Caco-2 (cell line): ENCODE measurements at regions of chr17 and their contacts with region 1.

Region 1: DNA sequence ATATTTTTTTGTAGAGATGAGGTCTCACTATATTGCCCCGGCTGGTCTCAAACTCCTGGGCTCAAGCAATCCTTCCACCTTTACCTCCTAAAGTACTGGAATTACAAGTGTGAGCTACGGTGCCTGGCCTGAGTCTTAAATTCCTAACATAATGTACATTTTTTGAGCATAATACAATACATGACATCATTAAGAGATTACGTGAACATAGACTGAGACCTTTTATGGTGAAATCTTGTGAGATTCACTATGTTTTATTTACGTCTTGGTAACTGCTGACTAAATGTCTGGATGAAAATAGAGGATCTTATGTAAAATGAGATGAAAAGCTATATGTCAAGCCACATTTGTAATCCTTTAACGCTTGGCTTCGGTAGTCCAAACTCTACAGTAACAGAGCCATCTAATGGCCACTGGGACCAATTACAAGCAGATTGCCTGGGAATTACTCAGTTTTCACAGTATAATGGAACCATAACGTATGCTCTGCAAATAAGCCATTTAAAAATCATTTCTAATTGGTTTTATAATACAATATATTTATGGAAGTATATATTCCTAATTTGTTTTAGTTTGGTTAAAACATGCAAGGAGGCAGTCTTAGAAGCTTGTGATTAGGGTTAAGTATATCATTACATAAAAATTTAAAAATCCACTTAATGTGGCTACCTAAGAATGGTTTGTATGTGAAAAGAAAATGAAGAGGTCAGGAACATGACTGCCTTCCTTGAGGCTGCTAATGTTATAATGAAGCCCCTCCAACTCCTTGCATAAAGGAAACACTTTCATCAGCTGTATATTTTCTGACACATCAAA is 8.1 kb upstream of the EFCAB13 start:
- DNase-seq: peak in 1 of 2 experiments; percentile 57
- H3K4me3 ChIP-seq: no peak overlapping the region
- H3K4me3 Mint-ChIP-seq: no peak overlapping the region
- H3K27ac Mint-ChIP-seq: no peak overlapping the region
- H3K4me1 ChIP-seq: peaks cover 11% of the 10 kb centered on the region; the same call in 1 of the 2 replicates
- H3K4me1 Mint-ChIP-seq: no peaks in the 10 kb centered on the region
- H3K27me3 ChIP-seq: no peaks in the 10 kb centered on the region
- H3K27me3 Mint-ChIP-seq: no peaks in the 10 kb centered on the region
- CTCF ChIP-seq: peak; percentile 82 to 87

Region 2: DNA sequence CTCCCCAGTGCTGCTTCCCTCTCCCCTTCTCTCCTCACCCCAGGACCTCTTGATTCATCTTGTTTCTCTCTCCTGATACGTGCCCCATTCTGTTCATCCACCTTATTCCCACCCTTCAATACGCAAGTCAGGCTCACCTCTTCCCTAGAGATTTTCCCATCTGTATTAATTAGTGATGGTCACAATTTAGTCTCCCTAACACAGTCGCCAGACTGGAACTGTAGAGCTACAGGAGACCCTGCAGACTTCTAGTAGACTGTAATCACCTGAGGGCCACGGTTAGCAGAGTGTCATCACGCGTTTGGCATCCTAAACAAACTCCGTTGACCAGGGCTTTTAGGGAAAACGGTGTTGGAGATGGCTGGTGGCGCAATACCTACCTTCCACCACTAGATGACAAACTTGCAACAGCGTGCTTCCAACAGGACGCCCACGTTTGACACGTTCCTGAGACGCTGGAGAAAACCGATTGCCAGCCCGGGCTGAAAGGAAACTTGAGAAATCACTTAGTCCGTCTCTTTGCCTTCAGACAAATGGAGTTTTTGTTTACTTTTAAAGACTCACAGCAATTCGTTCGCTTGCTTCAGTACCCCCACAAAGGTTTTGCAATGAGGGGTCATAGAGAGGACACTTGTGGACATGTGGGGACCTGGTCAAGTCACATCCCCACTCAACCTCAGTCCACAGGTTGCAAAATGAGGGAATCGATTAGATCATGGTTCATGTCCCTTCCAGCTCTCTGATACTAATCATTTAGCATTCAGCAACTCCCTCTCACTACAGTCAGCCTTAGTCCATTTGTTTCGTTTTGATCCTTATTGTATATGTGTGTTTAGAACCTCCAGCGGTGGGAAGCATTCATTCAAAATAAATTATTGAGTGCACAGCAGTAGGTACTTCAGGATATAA is 85.9 kb before region 1 on chr17:
- CTCF ChIA-PET with region 1: interaction called, 10 read pairs
- POLR2A ChIA-PET with region 1: no interaction called
- intact Hi-C with region 1: loop called (anchors 1 kb)
- DNase-seq: peak; percentile 85 to 86
- H3K4me3 ChIP-seq: peak overlapping the region; percentile 8
- H3K4me3 Mint-ChIP-seq: peak overlapping the region; percentile 63
- H3K27ac Mint-ChIP-seq: peak overlapping the region; percentile 2
- H3K4me1 ChIP-seq: peaks cover 4% of the 10 kb centered on the region; the same call in 1 of the 2 replicates
- H3K4me1 Mint-ChIP-seq: peaks cover 16% of the 10 kb centered on the region
- H3K27me3 ChIP-seq: no peaks in the 10 kb centered on the region
- H3K27me3 Mint-ChIP-seq: peaks cover 4% of the 10 kb centered on the region
- CTCF ChIP-seq: peak; percentile 95 to 98

Region 3: DNA sequence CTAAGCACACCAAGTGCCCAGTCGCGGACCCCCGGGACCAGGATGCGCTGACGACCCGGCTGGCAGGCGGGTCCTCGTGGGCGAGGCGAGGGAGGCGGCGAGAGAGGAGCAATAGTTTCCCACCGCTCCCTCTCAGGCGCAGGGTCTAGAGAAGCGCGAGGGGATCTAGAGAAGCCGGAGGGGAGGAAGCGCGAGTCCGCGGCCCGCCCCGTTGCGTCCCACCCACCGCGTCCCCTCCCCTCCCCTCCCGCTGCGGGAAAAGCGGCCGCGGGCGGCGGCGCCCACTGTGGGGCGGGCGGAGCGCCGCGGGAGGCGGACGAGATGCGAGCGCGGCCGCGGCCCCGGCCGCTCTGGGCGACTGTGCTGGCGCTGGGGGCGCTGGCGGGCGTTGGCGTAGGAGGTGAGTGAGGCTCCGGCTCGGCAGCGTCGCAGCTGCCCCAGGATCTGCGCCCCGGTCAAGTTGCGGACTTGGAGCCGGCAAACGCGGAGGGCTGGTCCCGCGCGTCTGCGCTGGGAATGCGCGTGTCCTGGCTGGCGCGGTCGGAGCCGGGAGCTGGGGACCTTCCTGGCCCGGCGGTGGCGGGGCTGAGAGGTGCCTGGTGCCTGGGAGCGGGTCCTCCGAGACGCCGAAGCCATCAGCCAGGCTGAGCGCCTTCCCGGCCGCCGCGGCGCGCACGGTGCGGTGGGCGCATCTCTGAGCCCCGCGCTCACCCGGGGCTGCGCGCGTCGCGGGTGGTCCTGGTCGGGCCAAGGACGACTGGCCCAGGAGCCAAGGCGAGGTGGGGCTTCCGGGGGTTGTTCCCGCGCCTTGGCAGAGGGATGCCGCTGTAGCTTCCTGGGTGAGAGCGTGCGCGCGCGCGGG is 61.9 kb before region 1 on chr17 and contains the start of gene ITGB3:
- CTCF ChIA-PET with region 1: interaction called, 7 read pairs
- POLR2A ChIA-PET with region 1: no interaction called
- intact Hi-C with region 1: loop called (anchors 1 kb)
- DNase-seq: peak; percentile 78 to 88
- H3K4me3 ChIP-seq: peak within 1 kb of the TSS; percentile 81
- H3K4me3 Mint-ChIP-seq: peak within 1 kb of the TSS; percentile 78
- H3K27ac Mint-ChIP-seq: peak within 1 kb of the TSS; percentile 37
- H3K4me1 ChIP-seq: peaks cover 28% of the 10 kb centered on the region
- H3K4me1 Mint-ChIP-seq: peaks cover 12% of the 10 kb centered on the region
- H3K27me3 ChIP-seq: peaks cover 4% of the 10 kb centered on the region
- H3K27me3 Mint-ChIP-seq: peaks cover 5% of the 10 kb centered on the region
- CTCF ChIP-seq: peak; percentile 43 to 65
- total RNA-seq, gene ITGB3: 0.48 and 1.2 TPM in 2 replicates

Region 4: GRCh38 chr17:47291238-47291873 is 24.3 kb before region 1 on chr17:
- CTCF ChIA-PET with region 1: interaction called, 17 read pairs
- POLR2A ChIA-PET with region 1: no interaction called
- intact Hi-C with region 1: no loop called
- DNase-seq: peak in 1 of 2 experiments; percentile 61
- H3K4me3 ChIP-seq: no peak overlapping the region
- H3K4me3 Mint-ChIP-seq: peak overlapping the region; percentile 58
- H3K27ac Mint-ChIP-seq: peak overlapping the region; percentile 37
- H3K4me1 ChIP-seq: peaks cover 22% of the 10 kb centered on the region
- H3K4me1 Mint-ChIP-seq: peaks cover 20% of the 10 kb centered on the region
- H3K27me3 ChIP-seq: no peaks in the 10 kb centered on the region; the same call in 1 of the 2 replicates
- H3K27me3 Mint-ChIP-seq: no peaks in the 10 kb centered on the region
- CTCF ChIP-seq: no peak